ENCODE measurements at regions of chr4 and their contacts with region 1.

Region 1: DNA sequence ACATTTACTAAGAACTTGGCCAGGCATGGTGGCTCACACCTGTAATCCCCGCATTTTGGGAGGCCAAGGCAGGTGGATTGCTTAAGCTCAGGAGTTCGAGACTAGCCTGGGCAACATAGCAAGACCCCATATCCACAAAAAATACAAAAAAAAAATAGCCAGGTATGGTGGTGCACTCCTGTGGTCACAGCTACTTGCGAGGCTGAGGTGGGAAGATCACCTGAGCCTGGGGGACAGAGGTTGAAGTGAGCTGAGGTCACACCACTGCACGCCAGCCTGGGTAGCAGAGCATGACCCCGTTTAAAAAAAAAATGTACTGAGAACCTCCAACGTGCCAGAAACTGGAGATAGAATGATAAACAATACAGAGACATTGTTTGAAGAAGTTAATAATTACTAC is 8.0 kb downstream of the OPRPN start:
- DNase-seq: no peak
- ATAC-seq: no peak
- H3K4me3 Mint-ChIP-seq: no peak overlapping the region
- H3K27ac Mint-ChIP-seq: no peak overlapping the region
- H3K4me1 Mint-ChIP-seq: no peaks in the 10 kb centered on the region
- H3K27me3 Mint-ChIP-seq: no peaks in the 10 kb centered on the region

Region 2: GRCh38 chr4:70449220-70449619 is 43.5 kb after region 1 on chr4:
- CTCF ChIA-PET with region 1: no interaction called
- POLR2A ChIA-PET with region 1: no interaction called
- intact Hi-C with region 1: loop called in 1 of 2 experiments (anchors 1 kb)
- DNase-seq: no peak
- ATAC-seq: no peak
- H3K4me3 Mint-ChIP-seq: no peak overlapping the region
- H3K27ac Mint-ChIP-seq: no peak overlapping the region
- H3K4me1 Mint-ChIP-seq: no peaks in the 10 kb centered on the region
- H3K27me3 Mint-ChIP-seq: no peaks in the 10 kb centered on the region